ENCODE measurements at regions of chr2 and their contacts with region 1.

Region 1: DNA sequence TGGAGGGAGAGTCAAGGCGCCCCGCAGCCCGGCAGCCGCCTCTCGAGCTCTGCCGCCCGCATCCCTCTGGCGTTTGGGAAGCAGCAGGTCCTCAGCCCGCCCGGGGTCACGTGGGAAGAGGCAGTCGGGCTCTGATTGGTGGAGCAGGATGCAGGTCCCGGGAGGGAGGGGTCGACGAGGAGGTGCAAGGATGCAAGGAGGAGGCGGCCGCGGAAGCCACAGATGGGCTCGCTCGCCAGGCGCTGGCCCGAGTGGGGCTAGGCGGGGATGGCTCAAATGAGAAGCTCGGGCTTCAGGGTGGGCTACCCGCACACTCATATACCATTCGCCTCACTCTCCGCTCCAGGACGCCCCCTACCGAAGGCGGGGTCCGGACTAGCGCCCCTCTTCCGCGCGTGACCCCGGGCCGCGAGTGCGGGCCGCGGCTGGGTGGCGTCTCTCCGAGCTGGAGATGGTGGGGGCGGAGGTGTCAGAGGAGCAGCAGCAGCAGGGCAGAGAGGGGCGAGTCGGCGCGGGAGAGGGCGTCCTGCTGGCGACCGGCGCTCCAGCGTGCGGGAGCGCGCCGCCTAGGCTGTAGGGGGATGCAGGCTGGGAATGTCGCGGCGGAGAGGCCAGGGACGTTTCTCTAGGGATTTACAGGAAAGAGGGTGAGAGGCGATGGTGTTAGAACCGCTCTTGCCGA is at the start of gene TMEFF2:
- DNase-seq: peak; percentile 73
- H3K4me3 Mint-ChIP-seq: peak within 1 kb of the TSS; percentile 74
- H3K27ac Mint-ChIP-seq: no peak within 1 kb of the TSS
- H3K4me1 Mint-ChIP-seq: peaks cover 26% of the 10 kb centered on the region
- H3K27me3 Mint-ChIP-seq: peaks cover 53% of the 10 kb centered on the region
- total RNA-seq, gene TMEFF2: not detected

Region 2: DNA sequence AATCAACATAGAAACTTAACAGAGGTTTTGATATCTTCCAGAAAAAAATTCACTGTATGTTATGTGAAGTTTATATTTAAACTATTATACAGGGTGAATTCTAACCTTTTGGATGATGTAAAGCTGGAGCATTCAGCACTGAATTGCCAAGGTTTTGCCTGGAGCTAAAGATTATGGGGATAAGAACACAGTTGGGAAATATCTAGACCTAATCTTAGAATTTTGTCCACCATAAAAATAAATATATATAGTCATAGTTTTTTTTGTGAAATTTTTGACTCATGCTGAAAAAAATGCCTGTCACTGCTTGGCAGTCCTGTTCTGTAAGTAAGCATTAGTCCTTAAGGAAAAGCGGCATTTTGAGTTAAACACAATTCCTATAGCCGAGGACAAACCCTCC is 339.1 kb after region 1 on chr2:
- CTCF ChIA-PET with region 1: no interaction called
- intact Hi-C with region 1: no loop called
- DNase-seq: no peak
- H3K4me3 Mint-ChIP-seq: no peak overlapping the region
- H3K27ac Mint-ChIP-seq: no peak overlapping the region
- H3K4me1 Mint-ChIP-seq: no peaks in the 10 kb centered on the region
- H3K27me3 Mint-ChIP-seq: no peaks in the 10 kb centered on the region

Region 3: DNA sequence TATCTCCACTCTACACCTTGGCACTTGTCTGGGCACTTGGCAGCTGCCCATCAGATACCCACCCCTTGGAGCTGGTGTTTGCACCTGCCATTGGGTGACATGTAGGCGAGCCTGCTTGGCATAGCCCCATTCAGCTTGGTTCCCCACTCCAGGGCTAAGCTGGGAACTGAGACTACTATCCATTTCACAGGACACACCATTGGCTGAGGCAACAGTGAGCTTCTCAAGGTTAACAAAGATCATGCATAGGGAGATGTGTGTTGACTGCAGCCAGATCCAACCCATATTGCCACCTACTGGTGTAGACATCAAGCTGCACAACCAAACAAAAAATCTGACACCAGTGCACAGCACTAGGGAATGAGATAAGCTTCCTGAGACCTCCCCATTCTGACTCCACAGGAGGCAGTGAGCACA is 1389.5 kb after region 1 on chr2:
- CTCF ChIA-PET with region 1: no interaction called
- intact Hi-C with region 1: loop called (anchors 2 kb)
- DNase-seq: no peak
- H3K4me3 Mint-ChIP-seq: no peak overlapping the region
- H3K27ac Mint-ChIP-seq: no peak overlapping the region
- H3K4me1 Mint-ChIP-seq: no peaks in the 10 kb centered on the region
- H3K27me3 Mint-ChIP-seq: no peaks in the 10 kb centered on the region